ENCODE measurements at regions of chr17 and their contacts with region 1.

Region 1: GRCh38 chr17:42183741-42184711 is 1.2 kb downstream of the HCRT start:
- H3K4me3 ChIP-seq: peak overlapping the region; percentile 38
- H3K27ac ChIP-seq: no peak overlapping the region; the same call in 1 of the 2 replicates
- H3K4me1 ChIP-seq: no peaks in the 10 kb centered on the region
- CTCF ChIP-seq: peak; percentile 50; the same call in 1 of the 2 replicates

Region 2: GRCh38 chr17:42193969-42194899 is 10.2 kb after region 1 on chr17 and contains the start of gene GHDC:
- CTCF ChIA-PET with region 1: interaction called, 17 read pairs
- POLR2A ChIA-PET with region 1: interaction called, 6 read pairs
- H3K4me3 ChIP-seq: peak within 1 kb of the TSS; percentile 77
- H3K27ac ChIP-seq: no peak within 1 kb of the TSS
- H3K4me1 ChIP-seq: peaks cover 3% of the 10 kb centered on the region; the same call in 1 of the 2 replicates
- CTCF ChIP-seq: no peak

Region 3: GRCh38 chr17:42275527-42276358 is 91.7 kb after region 1 on chr17:
- CTCF ChIA-PET with region 1: no interaction called
- POLR2A ChIA-PET with region 1: interaction called, 11 read pairs
- H3K4me3 ChIP-seq: peak overlapping the region; percentile 84
- H3K27ac ChIP-seq: peak overlapping the region; percentile 85; the same call in 1 of the 2 replicates
- H3K4me1 ChIP-seq: peaks cover 41% of the 10 kb centered on the region
- CTCF ChIP-seq: no peak